ENCODE measurements at regions of chr11 and their contacts with region 1.

Region 1: GRCh38 chr11:5441414-5441813 is at the start of gene OR51I1:
- DNase-seq: no peak
- H3K4me3 ChIP-seq: no peak within 1 kb of the TSS
- H3K4me3 Mint-ChIP-seq: no peak within 1 kb of the TSS
- H3K27ac ChIP-seq: no peak within 1 kb of the TSS
- H3K27ac Mint-ChIP-seq: peak within 1 kb of the TSS in 1 of 7 donors; percentile 5
- H3K4me1 ChIP-seq: no peaks in the 10 kb centered on the region
- H3K4me1 Mint-ChIP-seq: no peaks in the 10 kb centered on the region
- H3K27me3 ChIP-seq: no peaks in the 10 kb centered on the region
- H3K27me3 Mint-ChIP-seq: peaks cover 4 to 9% of the 10 kb centered on the region in 2 donors
- total RNA-seq, gene OR51I1: not detected

Region 2: DNA sequence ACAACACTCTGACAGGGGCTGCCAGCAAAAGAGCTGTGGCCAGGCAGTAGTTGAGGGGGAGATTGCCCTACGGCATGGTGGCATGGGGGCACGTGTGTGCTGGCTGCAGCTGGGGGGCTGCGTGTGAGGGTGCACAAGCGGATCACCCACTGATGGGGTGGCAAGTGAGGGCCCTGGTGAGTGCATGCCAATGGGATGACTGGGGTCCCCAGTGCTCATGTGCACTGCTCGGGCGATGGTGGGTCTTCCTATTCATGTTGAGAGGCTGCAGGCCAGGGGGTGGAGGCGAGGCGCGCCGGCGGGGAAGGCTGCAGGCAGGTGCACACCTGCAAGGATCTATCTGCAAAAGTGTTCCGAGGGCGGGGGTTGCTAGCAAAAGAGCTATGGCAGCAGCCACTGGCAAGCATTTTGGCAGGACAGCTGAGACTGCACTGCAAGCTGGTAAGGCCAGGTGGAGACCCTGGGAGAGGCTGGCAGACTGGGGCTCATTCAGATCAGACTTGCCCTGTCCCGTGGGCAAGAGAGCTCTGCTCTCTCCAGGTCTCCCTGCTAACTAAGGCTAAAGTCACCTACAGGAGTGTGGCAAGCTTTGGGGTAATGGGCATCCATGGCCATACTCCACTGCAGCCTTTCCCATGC is 19.7 kb after region 1 on chr11:
- CTCF ChIA-PET with region 1: no interaction called
- POLR2A ChIA-PET with region 1: no interaction called
- intact Hi-C with region 1: no loop called
- DNase-seq: no peak
- H3K4me3 ChIP-seq: no peak overlapping the region
- H3K4me3 Mint-ChIP-seq: no peak overlapping the region
- H3K27ac ChIP-seq: no peak overlapping the region
- H3K27ac Mint-ChIP-seq: no peak overlapping the region
- H3K4me1 ChIP-seq: no peaks in the 10 kb centered on the region
- H3K4me1 Mint-ChIP-seq: no peaks in the 10 kb centered on the region
- H3K27me3 ChIP-seq: no peaks in the 10 kb centered on the region
- H3K27me3 Mint-ChIP-seq: peaks cover 2 to 3% of the 10 kb centered on the region in 2 donors

Region 3: GRCh38 chr11:5489576-5490357 is 48.4 kb after region 1 on chr11:
- CTCF ChIA-PET with region 1: no interaction called
- POLR2A ChIA-PET with region 1: no interaction called
- intact Hi-C with region 1: loop called (anchors 10 kb)
- DNase-seq: no peak
- H3K4me3 ChIP-seq: no peak overlapping the region
- H3K4me3 Mint-ChIP-seq: no peak overlapping the region
- H3K27ac ChIP-seq: no peak overlapping the region
- H3K27ac Mint-ChIP-seq: no peak overlapping the region
- H3K4me1 ChIP-seq: no peaks in the 10 kb centered on the region
- H3K4me1 Mint-ChIP-seq: no peaks in the 10 kb centered on the region
- H3K27me3 ChIP-seq: no peaks in the 10 kb centered on the region
- H3K27me3 Mint-ChIP-seq: peaks cover 0 to 11% of the 10 kb centered on the region in 2 donors